CD4-positive, alpha-beta memory T cell (primary cell): ENCODE measurements at regions of chr14 and their contacts with region 1.

Region 1: DNA sequence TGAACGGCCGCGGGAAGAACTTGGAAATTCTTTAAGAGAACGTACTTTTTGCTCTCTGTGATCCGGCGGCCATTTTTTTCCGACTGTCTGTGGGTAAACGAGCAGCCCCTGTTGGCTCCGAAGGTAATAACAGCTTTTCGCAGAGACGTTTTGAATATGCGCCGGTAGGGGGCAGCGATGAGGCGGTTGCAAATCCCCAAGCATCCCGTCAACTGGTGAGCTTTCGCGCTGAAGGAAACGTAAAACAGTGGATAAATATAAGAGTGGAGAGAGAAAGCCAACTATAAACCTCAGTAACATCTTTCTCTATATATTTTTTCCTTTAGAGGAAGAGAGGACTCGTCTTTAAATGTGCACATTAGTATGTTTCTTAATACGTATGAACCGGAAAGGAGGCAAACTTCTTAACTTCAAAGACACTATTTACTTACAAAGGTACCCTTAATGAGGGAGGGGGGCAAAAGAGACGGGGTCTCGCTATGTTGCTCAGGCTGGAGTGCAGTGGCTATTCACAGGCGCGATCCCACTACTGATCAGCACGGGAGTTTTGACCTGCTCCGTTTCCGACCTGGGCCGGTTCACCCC is 9.6 kb upstream of the NEMF start:
- DNase-seq: peak; percentile 85 to 91 (median 88)
- H3K4me3 ChIP-seq: peak overlapping the region; percentile 61 to 76
- H3K4me3 Mint-ChIP-seq: no peak overlapping the region
- H3K27ac ChIP-seq: peak overlapping the region; percentile 97
- H3K27ac Mint-ChIP-seq: no peak overlapping the region
- H3K4me1 ChIP-seq: peaks cover 38% of the 10 kb centered on the region
- H3K4me1 Mint-ChIP-seq: peaks cover 0 to 11% (median 6%) of the 10 kb centered on the region in 4 donors
- H3K27me3 ChIP-seq: no peaks in the 10 kb centered on the region
- H3K27me3 Mint-ChIP-seq: peaks cover 3 to 8% of the 10 kb centered on the region in 2 donors

Region 2: DNA sequence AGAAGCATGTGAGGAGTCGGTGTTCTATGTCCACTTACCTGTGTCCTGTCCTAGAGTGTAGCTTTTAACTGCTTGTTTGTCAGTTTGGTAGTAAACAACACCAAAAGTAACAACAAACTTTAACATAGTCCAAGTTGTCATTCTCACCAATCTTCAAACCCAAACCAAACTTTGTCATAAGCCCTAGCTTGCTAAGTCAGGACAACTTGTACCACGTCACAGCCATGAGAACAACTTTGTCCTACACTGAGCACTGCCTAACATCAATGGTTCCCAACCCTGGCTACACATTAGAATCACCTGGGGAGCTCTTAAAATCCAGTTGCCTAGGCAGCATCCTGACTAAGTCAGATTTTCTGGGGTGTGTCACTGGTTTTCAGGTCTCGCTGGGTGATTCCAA is 585.3 kb before region 1 on chr14:
- CTCF ChIA-PET with region 1: no interaction called
- POLR2A ChIA-PET with region 1: no interaction called
- intact Hi-C with region 1: no loop called
- DNase-seq: no peak
- H3K4me3 ChIP-seq: no peak overlapping the region
- H3K4me3 Mint-ChIP-seq: no peak overlapping the region
- H3K27ac ChIP-seq: no peak overlapping the region
- H3K27ac Mint-ChIP-seq: no peak overlapping the region
- H3K4me1 ChIP-seq: no peaks in the 10 kb centered on the region
- H3K4me1 Mint-ChIP-seq: no peaks in the 10 kb centered on the region
- H3K27me3 ChIP-seq: no peaks in the 10 kb centered on the region
- H3K27me3 Mint-ChIP-seq: peaks cover 0 to 2% of the 10 kb centered on the region in 2 donors

Region 3: DNA sequence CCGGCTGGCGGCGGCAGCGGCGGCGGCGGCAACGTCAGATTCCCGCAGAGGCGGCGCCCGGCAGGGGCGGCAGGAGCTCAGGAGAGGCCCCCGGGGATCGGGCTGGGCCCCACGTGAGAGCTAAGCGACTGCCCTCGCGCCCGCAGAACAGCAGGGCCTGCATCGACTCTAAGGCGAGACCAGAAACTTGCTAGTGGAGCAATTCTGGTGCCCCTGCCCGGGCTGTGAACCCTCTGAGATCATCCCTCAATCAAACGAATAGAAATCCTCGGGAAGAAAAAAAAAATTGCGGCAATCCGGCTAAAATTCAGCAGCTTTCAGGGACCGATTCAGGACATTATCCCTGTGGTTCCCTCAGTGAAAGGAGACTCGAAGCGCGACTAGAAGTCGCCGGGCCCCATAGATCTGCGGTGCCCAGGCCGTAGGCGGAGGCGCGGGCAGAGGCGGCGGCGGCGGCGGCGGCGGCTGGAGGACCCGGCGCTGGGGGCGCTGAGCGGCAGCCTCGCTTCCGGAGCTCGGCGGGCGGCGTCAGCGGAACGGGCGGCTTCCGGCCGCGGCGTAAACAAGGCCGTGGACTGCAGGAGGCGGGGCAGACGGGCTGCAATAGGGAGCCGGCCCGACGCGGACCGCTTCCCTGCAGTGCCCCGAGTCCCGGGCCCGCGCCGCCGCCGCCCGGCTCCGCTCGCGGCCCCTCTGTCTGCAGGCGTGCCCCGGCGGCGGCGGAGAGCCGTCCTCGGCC is 94.5 kb before region 1 on chr14 and contains the start of gene KLHDC2:
- CTCF ChIA-PET with region 1: interaction called, 10 read pairs
- POLR2A ChIA-PET with region 1: interaction called, 34 read pairs
- intact Hi-C with region 1: no loop called
- DNase-seq: peak; percentile 87 to 90 (median 89)
- H3K4me3 ChIP-seq: peak within 1 kb of the TSS; percentile 81 to 97
- H3K4me3 Mint-ChIP-seq: peak within 1 kb of the TSS; percentile 94 to 99 (median 98)
- H3K27ac ChIP-seq: peak within 1 kb of the TSS; percentile 95
- H3K27ac Mint-ChIP-seq: peak within 1 kb of the TSS; percentile 99 to 100 (median 99)
- H3K4me1 ChIP-seq: peaks cover 30% of the 10 kb centered on the region
- H3K4me1 Mint-ChIP-seq: peaks cover 19 to 45% (median 28%) of the 10 kb centered on the region in 4 donors
- H3K27me3 ChIP-seq: no peaks in the 10 kb centered on the region
- H3K27me3 Mint-ChIP-seq: peaks cover 0 to 1% of the 10 kb centered on the region in 2 donors
- total RNA-seq, gene KLHDC2: 84.0 to 86.4 TPM

Region 4: GRCh38 chr14:49946320-49947141 is 84.3 kb after region 1 on chr14:
- CTCF ChIA-PET with region 1: interaction called, 21 read pairs
- POLR2A ChIA-PET with region 1: interaction called, 33 read pairs
- intact Hi-C with region 1: no loop called
- DNase-seq: peak; percentile 40 to 67 (median 41)
- H3K4me3 ChIP-seq: peak overlapping the region in 1 of 2 donors; percentile 11
- H3K4me3 Mint-ChIP-seq: peak overlapping the region; percentile 1 to 78 (median 67)
- H3K27ac ChIP-seq: peak overlapping the region; percentile 64
- H3K27ac Mint-ChIP-seq: peak overlapping the region; percentile 90 to 97 (median 94)
- H3K4me1 ChIP-seq: peaks cover 69% of the 10 kb centered on the region
- H3K4me1 Mint-ChIP-seq: peaks cover 59 to 91% (median 72%) of the 10 kb centered on the region in 4 donors
- H3K27me3 ChIP-seq: no peaks in the 10 kb centered on the region
- H3K27me3 Mint-ChIP-seq: no peaks in the 10 kb centered on the region

Region 5: GRCh38 chr14:50038398-50039119 is 176.4 kb after region 1 on chr14:
- CTCF ChIA-PET with region 1: interaction called, 56 read pairs
- POLR2A ChIA-PET with region 1: interaction called, 57 read pairs
- intact Hi-C with region 1: no loop called
- DNase-seq: peak in 2 of 5 donors; percentile 10 to 63
- H3K4me3 ChIP-seq: no peak overlapping the region
- H3K4me3 Mint-ChIP-seq: peak overlapping the region in 7 of 8 donors; percentile 37 to 92 (median 73)
- H3K27ac ChIP-seq: peak overlapping the region; percentile 28
- H3K27ac Mint-ChIP-seq: peak overlapping the region; percentile 81 to 96 (median 93)
- H3K4me1 ChIP-seq: peaks cover 59% of the 10 kb centered on the region
- H3K4me1 Mint-ChIP-seq: peaks cover 38 to 71% (median 57%) of the 10 kb centered on the region in 4 donors
- H3K27me3 ChIP-seq: no peaks in the 10 kb centered on the region
- H3K27me3 Mint-ChIP-seq: no peaks in the 10 kb centered on the region

Region 6: GRCh38 chr14:50091240-50091913 is 229.2 kb after region 1 on chr14:
- CTCF ChIA-PET with region 1: interaction called, 42 read pairs
- POLR2A ChIA-PET with region 1: interaction called, 151 read pairs
- intact Hi-C with region 1: no loop called
- DNase-seq: no peak
- H3K4me3 ChIP-seq: no peak overlapping the region
- H3K4me3 Mint-ChIP-seq: no peak overlapping the region
- H3K27ac ChIP-seq: no peak overlapping the region
- H3K27ac Mint-ChIP-seq: peak overlapping the region in 3 of 7 donors; percentile 9 to 29 (median 25)
- H3K4me1 ChIP-seq: peaks cover 45% of the 10 kb centered on the region
- H3K4me1 Mint-ChIP-seq: peaks cover 31 to 63% (median 47%) of the 10 kb centered on the region in 4 donors
- H3K27me3 ChIP-seq: no peaks in the 10 kb centered on the region
- H3K27me3 Mint-ChIP-seq: no peaks in the 10 kb centered on the region

Region 7: DNA sequence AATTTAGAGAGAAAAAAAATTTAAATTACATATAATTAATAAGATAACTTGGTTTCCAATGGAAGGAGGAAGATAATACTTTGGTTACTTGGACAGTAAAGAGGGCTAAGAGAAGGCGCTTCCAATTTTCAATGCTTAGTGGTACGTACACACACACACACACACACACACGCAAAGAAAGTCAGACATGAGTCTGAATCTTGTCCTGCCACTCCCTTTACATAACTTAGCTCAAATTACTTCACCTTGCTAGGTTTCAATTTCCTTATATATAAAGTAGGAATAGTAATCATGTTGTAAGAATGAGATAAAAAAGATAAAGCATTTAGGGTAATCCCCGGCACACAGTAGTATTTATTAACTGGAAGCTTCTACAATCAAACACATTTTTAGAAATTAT is 293.9 kb after region 1 on chr14:
- CTCF ChIA-PET with region 1: no interaction called
- POLR2A ChIA-PET with region 1: no interaction called
- intact Hi-C with region 1: no loop called
- DNase-seq: no peak
- H3K4me3 ChIP-seq: no peak overlapping the region
- H3K4me3 Mint-ChIP-seq: no peak overlapping the region
- H3K27ac ChIP-seq: no peak overlapping the region
- H3K27ac Mint-ChIP-seq: no peak overlapping the region
- H3K4me1 ChIP-seq: no peaks in the 10 kb centered on the region
- H3K4me1 Mint-ChIP-seq: peaks cover 0 to 2% (median 0%) of the 10 kb centered on the region in 4 donors
- H3K27me3 ChIP-seq: no peaks in the 10 kb centered on the region
- H3K27me3 Mint-ChIP-seq: no peaks in the 10 kb centered on the region

Region 8: GRCh38 chr14:50311975-50312733 is 450.0 kb after region 1 on chr14 and contains the starts of genes DMAC2L and L2HGDH:
- CTCF ChIA-PET with region 1: no interaction called
- POLR2A ChIA-PET with region 1: interaction called, 5 read pairs
- intact Hi-C with region 1: loop called (anchors 1 kb)
- DNase-seq: peak; percentile 86 to 91 (median 89)
- H3K4me3 ChIP-seq: peak within 1 kb of the TSS; percentile 77 to 92
- H3K4me3 Mint-ChIP-seq: peak within 1 kb of the TSS; percentile 91 to 98 (median 97)
- H3K27ac ChIP-seq: peak within 1 kb of the TSS; percentile 76
- H3K27ac Mint-ChIP-seq: peak within 1 kb of the TSS; percentile 92 to 99 (median 99)
- H3K4me1 ChIP-seq: peaks cover 30% of the 10 kb centered on the region
- H3K4me1 Mint-ChIP-seq: peaks cover 30 to 47% (median 34%) of the 10 kb centered on the region in 4 donors
- H3K27me3 ChIP-seq: no peaks in the 10 kb centered on the region
- H3K27me3 Mint-ChIP-seq: no peaks in the 10 kb centered on the region
- total RNA-seq, gene DMAC2L: 15.9 to 19.5 TPM
- total RNA-seq, gene L2HGDH: 4.9 to 5.5 TPM